CD4-positive, alpha-beta T cell (primary cell): ENCODE measurements at regions of chr10 and their contacts with region 1.

Region 1: GRCh38 chr10:133438711-133439273 is 14.4 kb upstream of the SPRN start:
- DNase-seq: peak in 3 of 14 experiments; percentile 54 to 60 (median 55)
- ATAC-seq: no peak
- H3K4me3 ChIP-seq: no peak overlapping the region
- H3K4me3 Mint-ChIP-seq: no peak overlapping the region
- H3K27ac ChIP-seq: no peak overlapping the region
- H3K27ac Mint-ChIP-seq: no peak overlapping the region
- H3K4me1 ChIP-seq: peaks cover 53% of the 10 kb centered on the region
- H3K4me1 Mint-ChIP-seq: peaks cover 29% of the 10 kb centered on the region
- H3K27me3 ChIP-seq: peaks cover 0 to 5% of the 10 kb centered on the region in 2 experiments
- H3K27me3 Mint-ChIP-seq: peaks cover 11% of the 10 kb centered on the region
- CTCF ChIP-seq: peak; percentile 14

Region 2: DNA sequence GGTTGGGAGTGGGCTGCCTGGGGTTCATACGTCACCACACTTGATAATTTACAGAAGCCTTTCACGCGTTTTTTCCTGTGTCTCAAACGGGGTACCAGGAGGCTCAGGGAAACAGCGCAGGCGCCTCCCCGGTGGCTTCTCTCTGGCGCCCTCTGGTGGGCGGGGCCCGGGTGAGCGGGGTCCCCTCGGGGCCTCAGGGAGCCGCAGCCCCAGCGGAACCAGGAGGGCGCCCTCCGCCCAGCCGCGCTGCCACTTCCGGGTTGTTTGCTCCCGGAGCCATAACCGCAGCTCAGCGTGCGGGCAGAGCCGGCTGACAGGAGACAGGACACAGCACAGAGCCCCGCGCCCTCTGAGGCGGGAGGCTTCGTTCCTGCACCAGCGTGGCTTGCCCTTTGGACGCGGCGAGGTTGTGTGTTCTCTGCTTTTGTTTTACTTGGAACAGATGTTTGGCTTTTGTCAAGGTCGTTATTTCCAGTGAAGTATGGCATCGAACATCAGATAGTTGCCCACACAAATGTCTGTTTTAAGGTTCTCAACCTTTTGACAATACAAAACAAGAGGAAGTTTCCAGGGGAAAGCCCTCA is 81.5 kb after region 1 on chr10:
- CTCF ChIA-PET with region 1: no interaction called
- POLR2A ChIA-PET with region 1: no interaction called
- intact Hi-C with region 1: loop called (anchors 2 kb)
- DNase-seq: peak; percentile 74 to 95 (median 90)
- ATAC-seq: peak; percentile 98
- H3K4me3 ChIP-seq: peak overlapping the region; percentile 49
- H3K4me3 Mint-ChIP-seq: peak overlapping the region; percentile 58
- H3K27ac ChIP-seq: no peak overlapping the region
- H3K27ac Mint-ChIP-seq: no peak overlapping the region
- H3K4me1 ChIP-seq: peaks cover 12% of the 10 kb centered on the region
- H3K4me1 Mint-ChIP-seq: peaks cover 11% of the 10 kb centered on the region
- H3K27me3 ChIP-seq: peaks cover 0 to 4% of the 10 kb centered on the region in 2 experiments
- H3K27me3 Mint-ChIP-seq: peaks cover 17% of the 10 kb centered on the region
- CTCF ChIP-seq: peak; percentile 93

Region 3: DNA sequence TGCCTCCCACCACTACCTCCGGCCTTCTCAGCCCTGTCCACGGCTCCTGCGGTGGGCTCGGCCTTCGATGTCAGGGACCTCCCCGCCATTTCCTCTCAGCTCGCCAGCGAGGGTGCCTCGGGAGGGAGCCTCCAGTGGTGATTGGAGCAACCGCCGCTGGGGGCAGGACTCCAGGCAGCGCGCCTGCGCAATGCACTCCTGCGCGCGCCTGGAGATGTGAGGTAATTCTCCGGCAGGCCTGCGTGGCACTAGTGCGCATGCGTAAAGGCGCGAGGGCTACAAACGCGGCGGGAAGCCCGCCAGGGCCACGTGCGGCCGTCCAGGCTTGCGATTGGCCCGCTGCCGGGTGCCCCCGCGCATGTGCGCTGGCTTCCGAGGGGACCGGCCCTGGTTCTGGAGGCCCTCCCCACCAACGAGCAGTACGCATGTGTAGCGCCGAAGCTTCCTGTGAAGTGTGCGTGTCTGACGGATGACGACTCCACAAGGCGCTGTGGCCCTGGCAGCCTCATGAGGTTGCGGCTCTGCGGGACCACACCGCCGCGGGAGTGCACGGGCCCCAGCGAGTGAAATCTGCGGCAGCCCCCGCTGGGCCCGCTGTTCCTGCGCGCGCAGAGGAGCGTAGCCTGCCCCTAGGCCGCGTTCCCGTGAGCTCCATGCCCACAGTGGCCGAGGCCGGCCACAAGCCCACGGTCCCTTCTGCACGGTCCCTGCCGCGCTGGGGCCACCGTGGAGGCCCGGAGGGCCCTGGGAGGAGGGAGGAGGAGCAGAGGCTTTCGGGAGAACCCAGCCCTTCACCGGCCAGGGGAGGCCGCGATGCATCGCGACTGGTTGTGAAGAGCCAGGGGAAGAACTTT is 126.9 kb after region 1 on chr10 and contains the start of gene SYCE1:
- CTCF ChIA-PET with region 1: no interaction called
- POLR2A ChIA-PET with region 1: no interaction called
- intact Hi-C with region 1: loop called in 1 of 2 experiments (anchors 10 kb)
- DNase-seq: peak in 3 of 14 experiments; percentile 7 to 71 (median 58)
- ATAC-seq: no peak
- H3K4me3 ChIP-seq: peak within 1 kb of the TSS; percentile 20
- H3K4me3 Mint-ChIP-seq: no peak within 1 kb of the TSS
- H3K27ac ChIP-seq: no peak within 1 kb of the TSS
- H3K27ac Mint-ChIP-seq: no peak within 1 kb of the TSS
- H3K4me1 ChIP-seq: no peaks in the 10 kb centered on the region
- H3K4me1 Mint-ChIP-seq: no peaks in the 10 kb centered on the region
- H3K27me3 ChIP-seq: peaks cover 7 to 16% of the 10 kb centered on the region in 2 experiments
- H3K27me3 Mint-ChIP-seq: peaks cover 21% of the 10 kb centered on the region
- CTCF ChIP-seq: no peak
- total RNA-seq, gene SYCE1: 0.30 to 0.42 TPM